CD4-positive, alpha-beta T cell (primary cell): ENCODE measurements at regions of chr11 and their contacts with region 1.

Region 1: GRCh38 chr11:47552566-47553416 is at the start of gene CELF1:
- DNase-seq: peak; percentile 85 to 97 (median 91)
- ATAC-seq: peak; percentile 93
- H3K4me3 ChIP-seq: peak within 1 kb of the TSS; percentile 99
- H3K4me3 Mint-ChIP-seq: peak within 1 kb of the TSS; percentile 98
- H3K27ac ChIP-seq: peak within 1 kb of the TSS; percentile 78 to 88
- H3K27ac Mint-ChIP-seq: peak within 1 kb of the TSS; percentile 98
- H3K4me1 ChIP-seq: peaks cover 42% of the 10 kb centered on the region
- H3K4me1 Mint-ChIP-seq: peaks cover 54% of the 10 kb centered on the region
- H3K27me3 ChIP-seq: no peaks in the 10 kb centered on the region
- H3K27me3 Mint-ChIP-seq: no peaks in the 10 kb centered on the region
- CTCF ChIP-seq: peak; percentile 81
- total RNA-seq, gene CELF1: 103 to 111 TPM

Region 2: GRCh38 chr11:45846974-45847910 is 1705.5 kb before region 1 on chr11 and contains the start of gene CRY2:
- CTCF ChIA-PET with region 1: no interaction called
- POLR2A ChIA-PET with region 1: no interaction called
- intact Hi-C with region 1: loop called in 1 of 2 experiments (anchors 5 kb)
- DNase-seq: peak; percentile 95 to 99 (median 98)
- ATAC-seq: peak; percentile 77
- H3K4me3 ChIP-seq: peak within 1 kb of the TSS; percentile 94
- H3K4me3 Mint-ChIP-seq: peak within 1 kb of the TSS; percentile 96
- H3K27ac ChIP-seq: peak within 1 kb of the TSS; percentile 91 to 93
- H3K27ac Mint-ChIP-seq: peak within 1 kb of the TSS; percentile 100
- H3K4me1 ChIP-seq: peaks cover 41% of the 10 kb centered on the region
- H3K4me1 Mint-ChIP-seq: peaks cover 70% of the 10 kb centered on the region
- H3K27me3 ChIP-seq: no peaks in the 10 kb centered on the region
- H3K27me3 Mint-ChIP-seq: no peaks in the 10 kb centered on the region
- CTCF ChIP-seq: no peak
- total RNA-seq, gene CRY2: 248 TPM

Region 3: GRCh38 chr11:46948378-46949131 is 604.2 kb before region 1 on chr11:
- CTCF ChIA-PET with region 1: no interaction called
- POLR2A ChIA-PET with region 1: no interaction called
- intact Hi-C with region 1: no loop called
- DNase-seq: no peak
- ATAC-seq: no peak
- H3K4me3 ChIP-seq: no peak overlapping the region
- H3K4me3 Mint-ChIP-seq: no peak overlapping the region
- H3K27ac ChIP-seq: no peak overlapping the region
- H3K27ac Mint-ChIP-seq: no peak overlapping the region
- H3K4me1 ChIP-seq: no peaks in the 10 kb centered on the region
- H3K4me1 Mint-ChIP-seq: peaks cover 9% of the 10 kb centered on the region
- H3K27me3 ChIP-seq: no peaks in the 10 kb centered on the region
- H3K27me3 Mint-ChIP-seq: no peaks in the 10 kb centered on the region
- CTCF ChIP-seq: no peak

Region 4: GRCh38 chr11:47509077-47509536 is 43.7 kb before region 1 on chr11:
- CTCF ChIA-PET with region 1: interaction called, 11 read pairs
- POLR2A ChIA-PET with region 1: interaction called, 4 read pairs
- intact Hi-C with region 1: loop called in 1 of 2 experiments (anchors 5 kb)
- DNase-seq: peak in 2 of 14 experiments; percentile 26 to 27
- ATAC-seq: peak; percentile 64
- H3K4me3 ChIP-seq: no peak overlapping the region
- H3K4me3 Mint-ChIP-seq: peak overlapping the region; percentile 36
- H3K27ac ChIP-seq: peak overlapping the region; percentile 9 to 29
- H3K27ac Mint-ChIP-seq: peak overlapping the region; percentile 78
- H3K4me1 ChIP-seq: peaks cover 55% of the 10 kb centered on the region
- H3K4me1 Mint-ChIP-seq: peaks cover 73% of the 10 kb centered on the region
- H3K27me3 ChIP-seq: no peaks in the 10 kb centered on the region
- H3K27me3 Mint-ChIP-seq: no peaks in the 10 kb centered on the region
- CTCF ChIP-seq: no peak

Region 5: GRCh38 chr11:47538741-47539574 is 13.8 kb before region 1 on chr11:
- CTCF ChIA-PET with region 1: interaction called, 31 read pairs
- POLR2A ChIA-PET with region 1: interaction called, 7 read pairs
- intact Hi-C with region 1: no loop called
- DNase-seq: no peak
- ATAC-seq: no peak
- H3K4me3 ChIP-seq: no peak overlapping the region
- H3K4me3 Mint-ChIP-seq: peak overlapping the region; percentile 23
- H3K27ac ChIP-seq: no peak overlapping the region
- H3K27ac Mint-ChIP-seq: peak overlapping the region; percentile 77
- H3K4me1 ChIP-seq: peaks cover 56% of the 10 kb centered on the region
- H3K4me1 Mint-ChIP-seq: peaks cover 70% of the 10 kb centered on the region
- H3K27me3 ChIP-seq: no peaks in the 10 kb centered on the region
- H3K27me3 Mint-ChIP-seq: no peaks in the 10 kb centered on the region
- CTCF ChIP-seq: no peak

Region 6: DNA sequence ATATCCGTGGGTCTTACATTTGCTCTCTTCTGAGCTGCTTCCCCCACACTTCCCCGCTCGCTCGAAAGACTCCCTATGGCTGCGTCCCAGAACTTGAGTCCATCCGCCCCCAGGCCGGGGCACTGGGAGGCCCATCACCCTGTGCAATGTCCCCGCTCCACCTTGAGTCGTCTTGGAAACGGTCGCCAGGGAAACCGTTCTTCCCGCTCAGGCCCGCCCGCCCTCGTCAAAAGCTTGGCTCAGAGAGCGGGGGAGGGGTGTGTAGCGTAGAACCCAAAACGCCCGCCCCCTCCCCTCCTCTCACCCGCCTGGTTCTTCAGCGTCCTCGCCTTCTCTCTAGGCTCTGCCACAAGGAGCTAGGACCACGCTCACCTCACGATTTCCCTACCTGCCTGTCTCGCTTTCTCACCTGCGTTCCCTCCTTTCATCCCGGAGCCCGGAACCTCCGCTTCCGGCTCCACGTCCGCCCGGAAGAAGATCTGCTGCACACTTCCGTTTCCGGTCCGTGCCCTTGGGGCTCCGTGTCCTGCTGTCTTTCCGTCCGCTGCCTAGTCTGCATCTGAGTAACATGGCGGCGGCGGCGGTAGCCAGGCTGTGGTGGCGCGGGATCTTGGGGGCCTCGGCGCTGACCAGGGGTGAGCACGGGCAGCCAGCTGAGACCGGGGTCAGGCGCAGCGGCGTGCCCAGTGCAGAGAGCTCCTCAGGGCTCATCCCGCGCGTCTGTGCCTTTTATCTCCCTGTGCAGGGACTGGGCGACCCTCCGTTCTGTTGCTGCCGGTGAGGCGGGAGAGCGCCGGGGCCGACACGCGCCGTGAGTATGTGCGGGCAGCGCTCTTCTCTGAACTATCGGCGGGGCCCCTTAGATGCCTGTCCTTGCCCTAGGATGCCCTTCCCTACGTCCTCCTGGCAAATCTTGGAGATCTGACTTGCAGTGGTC is 26.0 kb after region 1 on chr11 and contains the starts of genes KBTBD4 and NDUFS3:
- CTCF ChIA-PET with region 1: interaction called, 11 read pairs
- POLR2A ChIA-PET with region 1: interaction called, 13 read pairs
- intact Hi-C with region 1: loop called in 1 of 2 experiments (anchors 2 kb)
- DNase-seq: peak; percentile 81 to 95 (median 85)
- ATAC-seq: peak; percentile 91
- H3K4me3 ChIP-seq: peak within 1 kb of the TSS; percentile 90
- H3K4me3 Mint-ChIP-seq: peak within 1 kb of the TSS; percentile 99
- H3K27ac ChIP-seq: peak within 1 kb of the TSS; percentile 76 to 81
- H3K27ac Mint-ChIP-seq: peak within 1 kb of the TSS; percentile 91
- H3K4me1 ChIP-seq: peaks cover 38% of the 10 kb centered on the region
- H3K4me1 Mint-ChIP-seq: peaks cover 41% of the 10 kb centered on the region
- H3K27me3 ChIP-seq: no peaks in the 10 kb centered on the region
- H3K27me3 Mint-ChIP-seq: no peaks in the 10 kb centered on the region
- CTCF ChIP-seq: no peak
- total RNA-seq, gene KBTBD4: 29.1 to 30.2 TPM
- total RNA-seq, gene NDUFS3: 139 to 144 TPM

Region 7: DNA sequence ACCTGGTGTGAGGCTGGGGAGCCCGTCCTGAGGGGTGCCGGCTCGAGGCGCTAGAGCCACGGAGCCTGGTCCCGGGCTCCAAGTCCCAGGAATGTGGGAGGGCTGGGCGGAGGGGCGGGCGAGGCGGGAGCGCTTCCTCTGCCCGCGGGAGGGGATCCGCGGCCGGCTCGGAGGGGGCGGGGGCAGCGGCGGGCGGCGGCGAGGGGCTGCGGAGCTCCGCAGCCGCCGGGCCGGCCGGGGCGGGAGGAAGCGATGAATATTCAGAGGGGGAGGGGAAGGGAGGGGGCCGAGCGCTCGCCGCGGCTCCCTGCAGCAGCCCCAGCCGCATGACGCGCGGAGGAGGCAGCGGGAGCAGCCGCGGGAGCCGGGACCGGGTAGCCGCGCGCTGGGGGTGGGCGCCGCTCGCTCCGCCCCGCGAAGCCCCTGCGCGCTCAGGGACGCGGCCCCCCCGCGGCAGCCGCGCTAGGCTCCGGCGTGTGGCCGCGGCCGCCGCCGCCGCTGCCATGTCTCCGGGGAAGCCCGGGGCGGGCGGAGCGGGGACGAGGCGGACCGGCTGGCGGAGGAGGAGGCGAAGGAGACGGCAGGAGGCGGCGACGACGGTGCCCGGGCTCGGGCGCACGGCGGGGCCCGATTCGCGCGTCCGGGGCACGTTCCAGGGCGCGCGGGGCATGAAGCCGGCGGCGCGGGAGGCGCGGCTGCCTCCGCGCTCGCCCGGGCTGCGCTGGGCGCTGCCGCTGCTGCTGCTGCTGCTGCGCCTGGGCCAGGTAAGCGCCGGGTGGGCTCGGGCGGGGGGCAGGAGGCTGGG is 427.7 kb after region 1 on chr11 and contains the start of gene PTPRJ:
- CTCF ChIA-PET with region 1: no interaction called
- POLR2A ChIA-PET with region 1: no interaction called
- intact Hi-C with region 1: no loop called
- DNase-seq: peak; percentile 36 to 88 (median 57)
- ATAC-seq: peak; percentile 68
- H3K4me3 ChIP-seq: peak within 1 kb of the TSS; percentile 70
- H3K4me3 Mint-ChIP-seq: peak within 1 kb of the TSS; percentile 98
- H3K27ac ChIP-seq: peak within 1 kb of the TSS in 1 of 2 donors; percentile 41
- H3K27ac Mint-ChIP-seq: peak within 1 kb of the TSS; percentile 91
- H3K4me1 ChIP-seq: peaks cover 39% of the 10 kb centered on the region
- H3K4me1 Mint-ChIP-seq: peaks cover 38% of the 10 kb centered on the region
- H3K27me3 ChIP-seq: no peaks in the 10 kb centered on the region
- H3K27me3 Mint-ChIP-seq: no peaks in the 10 kb centered on the region
- CTCF ChIP-seq: no peak
- total RNA-seq, gene PTPRJ: 26.6 to 28.9 TPM